WTC11 (cell line): ENCODE measurements at regions of chr16 and their contacts with region 1.

Region 1: DNA sequence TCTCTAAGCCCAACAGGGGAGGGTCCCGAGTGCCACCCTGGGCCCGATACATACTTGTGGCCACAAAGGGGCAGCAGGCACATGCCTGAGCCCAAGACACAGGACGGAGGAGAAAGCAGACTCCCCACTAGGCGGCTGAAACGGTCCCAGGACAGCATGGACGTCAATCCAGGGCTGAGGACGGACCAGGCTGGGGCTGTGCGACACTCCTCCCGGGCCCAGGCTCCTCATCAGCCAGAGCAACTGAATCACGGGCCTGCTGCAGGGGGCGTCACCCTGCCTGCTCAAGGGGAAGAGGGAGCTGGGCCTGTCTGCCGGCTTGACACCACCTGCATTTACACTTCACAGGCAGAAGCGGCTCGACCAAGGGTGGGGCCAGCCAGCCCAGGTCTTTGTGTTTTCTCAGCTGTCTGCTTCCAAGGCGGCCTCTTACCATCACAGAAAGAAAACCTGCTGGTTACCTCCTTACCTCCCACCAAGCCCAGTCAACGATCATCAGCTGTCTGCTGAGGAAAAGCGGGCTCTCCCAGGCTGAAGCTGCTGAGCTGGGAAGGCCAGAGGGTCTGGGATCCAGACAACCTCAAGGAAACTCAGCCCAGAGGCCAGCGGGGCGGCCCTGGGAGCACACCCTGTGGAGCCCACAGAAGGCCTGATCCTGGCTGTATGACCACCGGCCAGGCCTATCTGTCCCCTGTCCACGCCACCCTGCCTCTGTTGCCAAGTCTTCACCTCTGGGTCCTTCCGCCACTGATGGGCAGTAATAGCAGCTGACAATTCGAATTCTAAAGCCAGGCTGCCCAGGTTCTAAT is 26.4 kb downstream of the KIFC3 start:
- DNase-seq: peak; percentile 92
- ATAC-seq: peak; percentile 96
- H3K4me3 Mint-ChIP-seq: peak overlapping the region; percentile 35
- H3K27ac Mint-ChIP-seq: peak overlapping the region; percentile 91
- H3K4me1 Mint-ChIP-seq: peaks cover 33% of the 10 kb centered on the region
- H3K27me3 Mint-ChIP-seq: peaks cover 3% of the 10 kb centered on the region; the same call in 1 of the 2 replicates
- CTCF ChIP-seq: peak; percentile 24; the same call in 1 of the 2 replicates

Region 2: GRCh38 chr16:57475711-57476339 is 300.0 kb before region 1 on chr16:
- CTCF ChIA-PET with region 1: no interaction called
- POLR2A ChIA-PET with region 1: no interaction called
- DNase-seq: peak; percentile 95
- ATAC-seq: peak; percentile 81
- H3K4me3 Mint-ChIP-seq: peak overlapping the region; percentile 43; the same call in 1 of the 2 replicates
- H3K27ac Mint-ChIP-seq: peak overlapping the region; percentile 27; the same call in 1 of the 2 replicates
- H3K4me1 Mint-ChIP-seq: peaks cover 75% of the 10 kb centered on the region
- H3K27me3 Mint-ChIP-seq: peaks cover 6% of the 10 kb centered on the region
- CTCF ChIP-seq: peak; percentile 72

Region 3: GRCh38 chr16:57764341-57765159 is 11.3 kb before region 1 on chr16:
- CTCF ChIA-PET with region 1: interaction called, 30 read pairs
- POLR2A ChIA-PET with region 1: interaction called, 3 read pairs
- DNase-seq: peak; percentile 95
- ATAC-seq: peak; percentile 97
- H3K4me3 Mint-ChIP-seq: no peak overlapping the region
- H3K27ac Mint-ChIP-seq: no peak overlapping the region
- H3K4me1 Mint-ChIP-seq: peaks cover 17% of the 10 kb centered on the region
- H3K27me3 Mint-ChIP-seq: no peaks in the 10 kb centered on the region
- CTCF ChIP-seq: no peak

Region 4: DNA sequence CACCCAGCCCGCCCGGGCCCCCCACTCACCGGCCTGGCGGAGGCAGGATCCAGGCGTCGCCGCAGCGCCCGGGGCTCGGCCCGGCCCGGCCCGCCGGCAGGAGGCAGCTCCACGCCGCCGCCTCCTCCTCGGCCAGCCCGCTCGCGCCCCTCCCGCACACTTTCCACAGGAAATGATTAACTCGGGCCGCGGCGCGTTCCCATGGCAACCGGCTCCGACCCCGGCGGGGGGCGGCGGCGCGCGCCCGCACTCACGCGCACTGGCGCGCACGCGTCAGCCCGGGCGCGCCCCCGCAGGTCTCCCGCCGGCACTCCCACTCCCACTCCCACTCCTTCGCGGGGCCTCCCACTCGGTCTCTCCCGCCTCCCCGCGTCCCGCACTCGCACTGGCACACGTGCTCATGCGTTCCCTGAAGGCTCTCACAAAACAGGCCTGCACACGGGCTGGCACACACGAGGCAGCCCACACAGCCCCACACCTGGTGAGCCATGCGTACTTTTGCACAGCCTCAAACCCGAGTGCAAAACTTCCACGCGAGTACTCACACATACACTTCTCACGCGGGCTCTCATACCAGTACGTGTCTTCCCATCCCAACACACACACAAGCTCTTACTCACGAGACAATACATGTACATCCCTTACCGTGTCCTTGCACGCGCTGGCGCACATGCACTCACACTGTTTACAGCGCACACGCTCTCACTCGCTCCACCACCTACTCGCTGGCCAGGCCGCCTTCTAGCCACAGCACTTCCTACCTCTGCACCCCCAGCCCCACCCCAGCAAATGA is 26.7 kb after region 1 on chr16 and contains the start of gene KIFC3:
- CTCF ChIA-PET with region 1: interaction called, 120 read pairs
- POLR2A ChIA-PET with region 1: no interaction called
- DNase-seq: peak; percentile 61
- ATAC-seq: no peak; the same call in 1 of the 2 replicates
- H3K4me3 Mint-ChIP-seq: peak within 1 kb of the TSS; percentile 91
- H3K27ac Mint-ChIP-seq: peak within 1 kb of the TSS; percentile 66
- H3K4me1 Mint-ChIP-seq: peaks cover 62% of the 10 kb centered on the region
- H3K27me3 Mint-ChIP-seq: peaks cover 29% of the 10 kb centered on the region
- CTCF ChIP-seq: no peak
- total RNA-seq, gene KIFC3: 9.2 to 11.6 TPM (median 10.0 TPM) in 3 replicates

Region 5: DNA sequence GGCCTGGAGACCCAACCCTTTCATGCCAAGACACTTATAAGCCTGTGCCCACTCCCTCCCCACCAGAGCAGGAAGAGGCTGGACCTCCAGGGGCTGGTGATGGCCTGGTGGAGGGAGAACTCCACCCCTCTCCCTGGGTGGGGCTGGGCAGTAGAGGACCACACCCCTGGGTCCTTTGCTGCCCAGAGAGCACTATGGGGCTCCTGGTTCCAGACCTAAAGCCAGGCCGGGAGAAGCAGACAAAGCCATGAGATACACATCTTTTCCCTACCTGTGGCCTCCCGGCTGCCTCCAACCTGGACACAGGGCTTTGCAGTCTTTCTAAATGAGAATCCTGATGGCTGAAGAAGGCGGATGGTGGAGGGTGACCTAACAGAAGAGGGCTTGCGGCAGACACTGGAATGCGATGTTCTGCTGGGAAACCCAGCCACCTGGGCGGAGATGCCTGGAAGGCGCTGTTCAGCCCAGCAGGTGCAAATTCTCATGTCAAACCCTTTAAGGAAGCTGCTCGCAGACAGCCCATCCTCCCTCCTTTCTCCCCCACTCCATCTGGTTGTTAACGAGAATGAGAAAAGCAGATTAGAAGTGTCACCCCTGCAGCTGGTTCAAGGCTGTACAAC is 70.3 kb after region 1 on chr16:
- CTCF ChIA-PET with region 1: interaction called, 12 read pairs
- POLR2A ChIA-PET with region 1: no interaction called
- DNase-seq: peak; percentile 82
- ATAC-seq: peak; percentile 91
- H3K4me3 Mint-ChIP-seq: peak overlapping the region; percentile 57
- H3K27ac Mint-ChIP-seq: peak overlapping the region; percentile 97
- H3K4me1 Mint-ChIP-seq: peaks cover 52% of the 10 kb centered on the region
- H3K27me3 Mint-ChIP-seq: no peaks in the 10 kb centered on the region; the same call in 1 of the 2 replicates
- CTCF ChIP-seq: no peak

Region 6: DNA sequence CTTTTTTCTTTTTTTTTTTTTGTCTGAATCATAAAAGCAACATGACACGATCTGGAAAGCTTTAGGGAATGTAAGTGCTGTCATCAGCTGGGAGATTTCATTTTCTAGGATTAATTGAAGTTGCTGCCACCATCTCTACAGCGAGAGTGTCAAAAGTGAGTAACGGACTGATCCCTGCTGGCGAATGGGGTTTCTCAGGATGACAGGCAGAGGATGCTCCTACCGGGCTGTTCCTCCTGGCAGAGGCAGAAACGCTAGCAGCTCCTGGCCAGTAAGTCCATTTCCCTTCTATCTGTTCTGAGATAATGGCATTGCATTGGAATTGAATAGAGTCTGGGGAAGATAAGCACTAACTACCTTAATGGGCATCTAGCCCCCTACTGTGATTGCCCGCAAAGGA is 106.9 kb after region 1 on chr16:
- CTCF ChIA-PET with region 1: interaction called, 14 read pairs
- POLR2A ChIA-PET with region 1: no interaction called
- DNase-seq: no peak
- ATAC-seq: no peak
- H3K4me3 Mint-ChIP-seq: no peak overlapping the region
- H3K27ac Mint-ChIP-seq: no peak overlapping the region
- H3K4me1 Mint-ChIP-seq: peaks cover 23% of the 10 kb centered on the region
- H3K27me3 Mint-ChIP-seq: peaks cover 27% of the 10 kb centered on the region
- CTCF ChIP-seq: no peak

Region 7: GRCh38 chr16:57976331-57976796 is 200.5 kb after region 1 on chr16:
- CTCF ChIA-PET with region 1: interaction called, 17 read pairs
- POLR2A ChIA-PET with region 1: no interaction called
- DNase-seq: no peak
- ATAC-seq: no peak
- H3K4me3 Mint-ChIP-seq: no peak overlapping the region
- H3K27ac Mint-ChIP-seq: no peak overlapping the region
- H3K4me1 Mint-ChIP-seq: no peaks in the 10 kb centered on the region
- H3K27me3 Mint-ChIP-seq: no peaks in the 10 kb centered on the region
- CTCF ChIP-seq: no peak